B cell (primary cell): ENCODE measurements at regions of chr11 and their contacts with region 1.

Region 1: DNA sequence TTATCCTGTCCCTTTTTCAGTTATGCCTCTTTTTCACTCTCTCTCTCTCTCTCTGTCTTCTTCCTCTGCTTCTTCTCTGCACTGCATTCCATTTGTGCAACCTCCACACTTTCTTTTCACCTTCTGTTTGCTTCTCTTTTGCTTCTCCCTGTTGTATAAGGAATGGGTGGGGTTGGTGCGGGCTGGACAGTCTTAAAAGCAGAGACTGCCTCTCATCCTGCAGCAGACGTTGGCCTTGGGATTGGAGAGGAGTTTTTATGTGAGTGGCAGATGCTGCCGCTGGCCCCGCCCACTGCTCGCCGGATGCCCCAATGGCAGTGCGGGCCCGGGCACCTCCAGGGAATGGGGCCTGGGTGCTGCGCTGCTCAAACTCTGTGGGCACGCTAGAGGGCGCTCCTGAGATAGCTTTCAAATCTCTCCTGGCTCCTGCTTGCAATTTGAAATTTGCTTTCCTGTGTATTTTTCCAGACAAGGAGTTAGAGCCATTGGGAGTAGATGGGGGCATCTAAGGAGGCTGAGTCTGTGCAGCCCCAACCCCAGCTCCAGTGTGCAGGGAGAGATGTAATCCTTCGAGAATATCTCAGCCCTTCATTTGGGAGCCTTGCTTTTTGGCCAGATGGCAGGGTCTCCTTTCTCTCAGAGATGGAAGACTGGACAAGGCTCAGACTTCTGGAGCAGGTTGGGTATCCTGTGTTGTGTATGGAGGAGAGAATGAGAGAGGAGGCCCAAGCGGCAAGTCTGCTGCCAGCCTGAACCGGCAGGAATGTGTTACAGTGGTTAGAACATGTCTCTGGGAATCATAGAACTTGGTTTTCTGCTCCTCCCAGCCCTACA is 81.2 kb downstream of the GRAMD1B start:
- DNase-seq: peak; percentile 66
- ATAC-seq: peak; percentile 99
- H3K4me3 ChIP-seq: no peak overlapping the region
- H3K4me3 Mint-ChIP-seq: peak overlapping the region; percentile 42
- H3K27ac ChIP-seq: no peak overlapping the region
- H3K27ac Mint-ChIP-seq: no peak overlapping the region
- H3K4me1 ChIP-seq: peaks cover 3% of the 10 kb centered on the region in 2 donors
- H3K4me1 Mint-ChIP-seq: peaks cover 8% of the 10 kb centered on the region
- H3K27me3 ChIP-seq: no peaks in the 10 kb centered on the region
- H3K27me3 Mint-ChIP-seq: no peaks in the 10 kb centered on the region
- CTCF ChIP-seq: peak; percentile 86

Region 2: GRCh38 chr11:123484448-123484847 is 26.8 kb before region 1 on chr11:
- CTCF ChIA-PET with region 1: interaction called, 14 read pairs
- POLR2A ChIA-PET with region 1: no interaction called
- intact Hi-C with region 1: loop called (anchors 2 kb)
- DNase-seq: peak; percentile 34
- ATAC-seq: peak; percentile 49
- H3K4me3 ChIP-seq: no peak overlapping the region
- H3K4me3 Mint-ChIP-seq: peak overlapping the region; percentile 69
- H3K27ac ChIP-seq: no peak overlapping the region
- H3K27ac Mint-ChIP-seq: peak overlapping the region; percentile 78
- H3K4me1 ChIP-seq: peaks cover 34 to 50% of the 10 kb centered on the region in 2 donors
- H3K4me1 Mint-ChIP-seq: peaks cover 56% of the 10 kb centered on the region
- H3K27me3 ChIP-seq: peaks cover 0 to 12% (median 4%) of the 10 kb centered on the region in 4 experiments
- H3K27me3 Mint-ChIP-seq: no peaks in the 10 kb centered on the region
- CTCF ChIP-seq: no peak

Region 3: GRCh38 chr11:123543797-123544196 is 32.5 kb after region 1 on chr11:
- CTCF ChIA-PET with region 1: no interaction called
- POLR2A ChIA-PET with region 1: no interaction called
- intact Hi-C with region 1: no loop called
- DNase-seq: no peak
- ATAC-seq: no peak
- H3K4me3 ChIP-seq: no peak overlapping the region
- H3K4me3 Mint-ChIP-seq: no peak overlapping the region
- H3K27ac ChIP-seq: no peak overlapping the region
- H3K27ac Mint-ChIP-seq: no peak overlapping the region
- H3K4me1 ChIP-seq: peaks cover 0 to 19% of the 10 kb centered on the region in 2 donors
- H3K4me1 Mint-ChIP-seq: peaks cover 20% of the 10 kb centered on the region
- H3K27me3 ChIP-seq: no peaks in the 10 kb centered on the region
- H3K27me3 Mint-ChIP-seq: no peaks in the 10 kb centered on the region
- CTCF ChIP-seq: no peak